Right ventricle myocardium inferior (tissue), 1 donor: ENCODE measurements at regions of chr10 and their contacts with region 1.

Region 1: GRCh38 chr10:5684318-5684970 is at the start of gene TASOR2:
- DNase-seq: peak; percentile 99
- ATAC-seq: peak; percentile 98
- total RNA-seq, gene TASOR2: 36.7 TPM

Region 2: GRCh38 chr10:5606864-5607263 is 77.6 kb before region 1 on chr10:
- intact Hi-C with region 1: no loop called
- DNase-seq: no peak
- ATAC-seq: no peak

Region 3: GRCh38 chr10:5645375-5645774 is 39.1 kb before region 1 on chr10:
- intact Hi-C with region 1: loop called (anchors 1 kb)
- DNase-seq: no peak
- ATAC-seq: peak; percentile 58

Region 4: DNA sequence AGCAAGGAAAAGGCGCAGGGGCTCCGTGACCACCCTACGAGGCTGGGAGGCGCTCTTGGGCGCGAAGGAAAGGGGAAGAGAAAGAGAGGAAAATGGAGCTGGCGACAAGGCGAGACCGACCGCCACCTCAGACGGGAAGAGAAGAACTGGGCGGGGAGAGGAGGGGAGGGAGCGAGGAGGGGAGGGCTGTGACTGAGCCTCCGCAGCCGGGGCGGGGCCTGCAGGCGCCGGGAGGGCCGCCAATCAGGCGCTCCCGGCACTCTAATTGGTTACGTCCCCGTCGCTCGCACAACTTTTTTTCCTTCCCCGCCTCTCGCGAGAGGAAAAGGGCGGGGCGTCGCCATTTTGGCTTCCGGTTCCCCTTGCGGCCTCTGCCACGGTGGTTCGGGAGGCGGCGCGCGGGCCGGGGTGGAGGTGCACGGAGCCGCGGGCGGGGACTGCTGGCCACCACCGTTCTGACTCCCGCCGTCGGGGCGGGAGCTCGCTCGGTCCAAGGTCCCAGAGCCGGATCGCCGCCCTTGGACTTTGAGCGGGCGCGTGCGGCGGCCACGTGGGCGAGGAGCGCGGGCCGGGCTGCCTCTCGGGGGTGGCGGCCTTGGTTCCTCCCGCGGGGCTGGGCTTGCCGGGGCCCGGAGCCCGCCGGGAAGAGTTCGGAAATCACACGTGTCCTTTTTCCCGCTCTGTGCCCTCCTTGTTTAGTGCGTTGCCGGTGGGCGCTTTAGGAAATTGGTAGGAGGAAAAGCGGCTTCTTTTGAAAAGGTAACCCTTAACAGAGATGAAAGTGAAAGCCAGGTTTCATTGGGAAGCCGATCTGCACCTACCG is 129.1 kb after region 1 on chr10 and contains the start of gene GDI2:
- intact Hi-C with region 1: loop called (anchors 2 kb)
- DNase-seq: peak; percentile 97
- ATAC-seq: peak; percentile 99
- total RNA-seq, gene GDI2: 101 TPM